GM10248 (cell line): ENCODE measurements at regions of chr17 and their contacts with region 1.

Region 1: DNA sequence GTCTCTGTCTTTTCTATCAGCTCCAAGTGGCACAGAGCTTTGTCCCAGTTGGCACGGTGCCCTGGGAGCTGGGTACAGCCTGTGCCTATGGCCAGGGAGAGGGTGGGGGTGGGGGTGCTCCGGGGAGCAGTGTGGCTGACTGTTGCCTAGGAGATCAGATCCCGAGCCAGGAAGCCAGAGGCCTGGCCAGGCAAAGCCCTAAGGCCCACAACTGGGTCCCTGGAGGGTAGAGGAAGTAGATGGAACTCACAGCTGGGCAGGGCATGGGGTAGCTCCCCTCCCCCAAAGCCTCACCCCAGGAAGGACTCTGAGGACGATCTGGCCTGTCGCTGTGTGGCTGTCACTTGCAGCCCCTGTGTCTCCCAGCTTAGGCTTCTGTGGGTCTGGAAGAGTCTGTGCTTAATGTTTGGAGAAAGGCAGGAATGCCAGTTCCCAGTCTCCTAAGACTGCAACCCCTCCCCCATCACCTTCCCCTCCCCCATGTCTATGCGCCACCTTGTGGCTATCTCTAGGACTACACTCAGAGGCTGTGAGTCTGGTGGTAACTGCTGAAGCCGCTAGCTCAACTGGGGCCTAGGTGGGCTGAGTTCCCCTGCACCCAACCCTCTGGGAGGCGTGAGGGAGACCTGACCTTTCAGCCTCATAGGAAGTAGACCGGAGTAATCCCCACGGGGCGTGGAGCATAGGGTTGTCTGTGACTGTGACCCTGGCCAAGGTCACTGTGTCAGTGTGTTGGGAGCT is 12.6 kb downstream of the THRA start:
- DNase-seq: peak; percentile 72
- CTCF ChIP-seq: peak; percentile 79

Region 2: GRCh38 chr17:40026816-40027613 is 48.4 kb before region 1 on chr17:
- CTCF ChIA-PET with region 1: interaction called, 15 read pairs
- POLR2A ChIA-PET with region 1: no interaction called
- DNase-seq: peak; percentile 92
- CTCF ChIP-seq: peak; percentile 84

Region 3: DNA sequence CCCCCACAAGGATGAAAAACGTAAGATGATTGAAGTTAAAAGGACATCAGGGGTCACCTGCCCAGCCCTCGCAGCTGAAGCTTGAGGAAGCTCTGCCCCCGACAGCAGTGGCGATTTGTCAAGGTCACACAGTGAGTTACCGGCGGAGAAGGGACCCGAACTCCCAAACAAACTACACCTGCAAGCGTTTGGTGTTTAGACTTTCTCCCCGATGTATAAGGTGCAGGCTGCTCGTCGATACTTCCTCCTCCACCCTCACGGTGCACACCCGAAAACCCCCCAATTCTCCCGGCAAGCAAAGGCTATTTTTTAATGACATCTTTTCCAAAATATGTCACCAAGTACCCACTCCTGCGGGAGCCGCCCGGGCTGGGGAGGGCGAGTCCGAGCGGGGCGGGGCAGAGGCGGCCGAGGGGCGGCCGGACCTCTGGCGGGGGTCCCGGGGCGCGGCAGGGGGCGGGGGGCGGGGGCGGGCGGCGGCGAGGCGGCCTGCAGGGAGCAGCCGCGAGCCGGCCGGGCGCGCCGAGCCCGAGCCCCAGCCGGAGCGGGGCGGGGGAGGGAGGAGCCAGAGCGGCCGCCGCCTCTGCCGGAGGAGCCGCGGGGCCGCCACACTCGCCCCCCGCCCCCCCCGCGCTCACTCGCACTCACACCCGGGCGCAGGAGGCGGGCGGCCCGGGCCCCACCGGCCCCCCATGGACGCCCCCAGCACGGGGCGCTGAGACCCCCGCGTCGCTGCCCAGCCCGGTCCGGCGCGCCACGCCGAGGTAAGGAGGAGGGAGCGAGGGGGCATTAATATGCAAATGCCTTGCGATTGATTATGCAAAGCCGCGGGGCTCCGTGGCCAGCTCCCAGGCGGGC is 12.8 kb before region 1 on chr17 and contains the start of gene THRA:
- CTCF ChIA-PET with region 1: interaction called, 215 read pairs
- POLR2A ChIA-PET with region 1: interaction called, 4 read pairs
- DNase-seq: peak; percentile 88
- CTCF ChIP-seq: peak; percentile 27

Region 4: DNA sequence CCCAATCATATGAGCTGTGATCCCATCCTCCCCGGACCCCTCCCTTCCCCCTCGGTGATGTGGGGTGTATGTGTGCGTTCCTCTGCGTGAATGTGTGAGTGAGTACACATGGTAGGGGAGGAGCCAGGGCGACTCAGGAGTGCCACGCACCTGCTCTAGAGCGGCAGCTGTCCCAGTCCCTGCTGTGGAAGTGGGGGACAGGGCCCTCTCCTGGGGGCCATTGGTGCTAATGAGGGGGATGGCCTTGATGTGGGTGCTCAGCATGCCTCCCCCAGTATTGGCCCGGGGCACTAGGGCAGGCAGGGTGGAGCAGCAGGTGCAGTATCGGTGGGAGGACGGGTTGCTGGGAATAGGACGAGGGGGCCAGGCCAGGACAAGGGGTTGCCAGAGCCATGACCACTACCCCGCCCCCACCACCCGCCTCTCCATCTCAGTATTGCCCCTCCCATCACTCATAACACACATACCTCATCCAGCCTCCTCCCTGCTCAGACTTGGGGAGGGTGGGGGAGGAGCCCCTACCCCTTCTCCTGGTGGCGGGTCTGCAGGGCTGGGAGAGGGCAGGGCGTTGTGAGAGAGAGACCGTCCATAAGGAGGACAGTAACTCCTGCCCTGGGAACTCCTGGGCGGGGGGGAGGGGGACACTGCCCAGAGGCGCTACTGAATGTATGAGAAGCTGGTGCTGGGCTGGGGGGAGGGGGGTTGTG is 16.5 kb after region 1 on chr17:
- CTCF ChIA-PET with region 1: interaction called, 55 read pairs
- POLR2A ChIA-PET with region 1: no interaction called
- DNase-seq: no peak
- CTCF ChIP-seq: no peak

Region 5: GRCh38 chr17:40107522-40108174 is 32.3 kb after region 1 on chr17:
- CTCF ChIA-PET with region 1: interaction called, 67 read pairs
- POLR2A ChIA-PET with region 1: no interaction called
- DNase-seq: no peak
- CTCF ChIP-seq: no peak